Dorsolateral prefrontal cortex (tissue), 120 donors: ENCODE measurements at regions of chr3 and their contacts with region 1.

Region 1: DNA sequence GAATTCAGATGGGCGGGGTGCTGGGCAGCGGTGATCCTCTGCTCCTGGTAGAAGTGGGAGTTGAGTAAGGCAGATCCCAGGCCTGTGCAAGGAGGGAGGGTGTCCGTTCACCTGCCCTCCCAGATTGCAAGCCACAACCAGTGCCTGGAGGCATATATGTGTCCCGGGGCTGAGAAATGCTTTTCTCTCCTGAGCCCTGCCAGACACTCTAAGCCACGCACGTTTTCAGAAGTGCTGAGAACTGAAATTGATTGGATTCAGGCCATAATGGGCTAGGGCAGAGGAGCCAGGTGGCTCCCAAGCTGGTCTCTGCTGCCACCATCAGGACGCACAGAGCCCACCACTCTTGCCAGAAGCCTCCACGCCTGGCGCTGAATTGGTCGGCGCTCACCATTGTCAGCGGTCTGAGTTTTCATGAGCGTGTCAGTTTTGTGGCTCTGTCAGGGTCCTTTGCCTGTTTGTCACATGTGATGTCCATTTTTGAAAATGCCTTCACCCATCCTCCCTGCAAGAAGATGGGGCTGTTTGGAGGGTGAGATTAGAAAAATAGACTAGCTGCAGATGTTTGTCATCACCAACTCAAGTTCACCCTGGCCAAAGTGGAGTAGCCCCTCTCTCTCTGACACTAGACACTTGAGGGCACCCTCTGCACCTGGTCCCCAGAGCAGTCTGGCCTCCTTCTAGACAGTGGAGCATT is 15.4 kb upstream of the BFSP2 start:
- DNase-seq: peak; percentile 62 to 81 (median 74)
- H3K4me3 ChIP-seq: peak overlapping the region in 26 of 59 donors; percentile 3 to 47 (median 24)
- H3K27ac ChIP-seq: peak overlapping the region in 22 of 59 donors; percentile 1 to 88 (median 38)
- H3K27me3 ChIP-seq: no peaks in the 10 kb centered on the region
- CTCF ChIP-seq: peak; percentile 27 to 94 (median 84)

Region 2: GRCh38 chr3:132535575-132536441 is 848.7 kb before region 1 on chr3:
- intact Hi-C with region 1: loop called in 1 of 2 experiments (anchors 10 kb)
- DNase-seq: peak in 7 of 10 donors; percentile 37 to 75 (median 45)
- H3K4me3 ChIP-seq: no peak overlapping the region
- H3K27ac ChIP-seq: peak overlapping the region in 2 of 59 donors; percentile 2 to 56
- H3K27me3 ChIP-seq: no peaks in the 10 kb centered on the region
- CTCF ChIP-seq: peak; percentile 56 to 89 (median 77)

Region 3: GRCh38 chr3:132659365-132660051 is 725.0 kb before region 1 on chr3 and contains the start of gene ACAD11:
- intact Hi-C with region 1: loop called in 1 of 2 experiments (anchors 5 kb)
- DNase-seq: peak; percentile 50 to 83 (median 68)
- H3K4me3 ChIP-seq: peak within 1 kb of the TSS; percentile 67 to 99 (median 89)
- H3K27ac ChIP-seq: peak within 1 kb of the TSS; percentile 56 to 97 (median 91)
- H3K27me3 ChIP-seq: no peaks in the 10 kb centered on the region
- CTCF ChIP-seq: peak in 55 of 56 donors; percentile 29 to 70 (median 55)
- total RNA-seq, gene ACAD11: 18.7 to 51.8 (median 32.6) TPM

Region 4: GRCh38 chr3:132730891-132731580 is 653.4 kb before region 1 on chr3:
- intact Hi-C with region 1: loop called (anchors 2 to 5 kb)
- DNase-seq: no peak
- H3K4me3 ChIP-seq: no peak overlapping the region
- H3K27ac ChIP-seq: no peak overlapping the region
- H3K27me3 ChIP-seq: no peaks in the 10 kb centered on the region
- CTCF ChIP-seq: peak; percentile 5 to 79 (median 59)

Region 5: DNA sequence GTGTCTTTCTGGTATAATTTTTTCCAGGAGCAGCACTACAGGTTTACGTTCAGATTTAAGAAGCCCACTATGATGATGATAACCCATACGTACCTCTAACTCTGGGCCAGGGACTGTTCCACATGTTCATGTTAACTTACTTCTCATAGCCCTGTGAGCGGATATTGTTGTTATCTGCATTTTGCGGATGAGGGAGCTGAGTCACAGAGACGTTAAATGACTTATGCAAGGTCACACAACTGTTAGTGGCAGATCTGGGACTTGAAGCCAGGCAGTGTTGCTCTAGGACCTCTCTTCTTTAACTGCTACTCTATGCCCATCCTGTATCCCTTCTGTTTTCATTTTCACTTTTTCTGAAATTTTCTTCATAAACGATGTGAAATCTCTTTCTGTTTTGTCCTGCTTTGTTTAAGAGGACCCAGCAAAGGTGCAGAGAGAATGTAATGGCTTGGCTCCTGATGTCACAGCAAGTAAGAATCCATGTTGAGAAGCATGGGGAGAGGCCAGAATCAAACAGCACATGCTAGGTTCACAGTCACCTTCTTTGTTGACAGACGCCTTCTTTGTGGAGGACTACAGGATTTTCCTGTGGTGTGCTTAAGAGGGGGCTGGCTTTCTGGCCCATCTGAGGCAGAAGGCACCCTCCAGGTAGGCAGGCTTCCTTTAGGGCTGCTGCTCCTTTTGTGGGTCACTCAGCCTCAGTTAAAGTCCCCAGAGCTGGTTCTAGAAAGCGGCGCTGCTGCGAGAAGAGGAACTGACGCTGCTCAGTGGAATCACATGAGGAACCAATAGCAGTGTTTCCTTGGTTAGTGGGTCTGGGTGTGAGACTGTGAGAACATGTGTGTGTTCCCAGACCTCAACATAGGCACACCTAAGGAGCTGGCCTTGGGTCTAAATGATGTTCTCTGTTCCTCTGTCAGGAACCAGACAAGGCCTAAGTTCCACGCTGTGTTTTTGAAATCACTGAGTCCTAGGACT is 224.7 kb before region 1 on chr3:
- intact Hi-C with region 1: no loop called
- DNase-seq: no peak
- H3K4me3 ChIP-seq: no peak overlapping the region
- H3K27ac ChIP-seq: no peak overlapping the region
- H3K27me3 ChIP-seq: no peaks in the 10 kb centered on the region
- CTCF ChIP-seq: no peak

Region 6: GRCh38 chr3:133426721-133427120 is 42.2 kb after region 1 on chr3:
- intact Hi-C with region 1: loop called in 1 of 2 experiments (anchors 2 kb)
- DNase-seq: no peak
- H3K4me3 ChIP-seq: no peak overlapping the region
- H3K27ac ChIP-seq: peak overlapping the region in 1 of 59 donors; percentile 2
- H3K27me3 ChIP-seq: no peaks in the 10 kb centered on the region
- CTCF ChIP-seq: no peak